Head of caudate nucleus (tissue), 42 donors: ENCODE measurements at regions of chr16 and their contacts with region 1.

Region 1: DNA sequence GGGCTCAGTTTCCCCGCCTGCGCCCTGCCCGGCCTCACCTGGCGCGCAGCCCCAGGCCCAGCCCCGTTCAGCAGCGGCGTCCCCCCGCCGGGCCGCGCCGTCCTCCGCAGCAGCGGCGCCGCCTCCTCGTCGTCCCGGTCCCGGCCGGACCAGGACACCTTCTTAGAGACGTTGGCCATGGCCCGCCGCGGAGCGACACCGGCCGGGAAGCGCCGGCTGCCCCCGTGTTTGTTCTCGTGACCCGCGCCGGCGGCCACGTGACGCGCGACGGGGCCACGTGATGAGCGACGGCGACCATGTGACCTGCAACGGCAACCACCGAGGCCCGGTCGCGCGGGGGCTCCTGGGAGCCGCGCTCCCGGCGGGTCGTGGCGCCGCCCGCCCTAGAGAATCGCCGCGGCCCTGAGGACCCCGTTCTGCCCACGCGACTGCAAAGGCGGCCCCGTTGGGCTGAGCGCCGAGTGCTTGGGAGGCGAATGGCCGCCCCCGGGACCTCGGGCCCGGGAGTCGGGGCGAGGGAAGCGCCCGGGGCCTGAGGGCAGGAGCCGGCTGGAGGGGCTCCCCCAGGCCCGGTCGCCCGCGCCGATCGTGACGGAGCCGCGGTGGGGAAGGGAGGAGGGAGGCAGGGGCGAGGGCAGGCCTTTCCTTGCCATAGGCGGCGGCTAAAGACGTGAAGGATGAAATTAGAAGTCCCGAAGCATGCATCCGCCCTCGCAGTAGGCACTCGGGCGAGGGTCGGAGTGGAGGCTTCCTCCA is at the start of gene CLCN7:
- DNase-seq: peak; percentile 74 to 96 (median 89)

Region 2: DNA sequence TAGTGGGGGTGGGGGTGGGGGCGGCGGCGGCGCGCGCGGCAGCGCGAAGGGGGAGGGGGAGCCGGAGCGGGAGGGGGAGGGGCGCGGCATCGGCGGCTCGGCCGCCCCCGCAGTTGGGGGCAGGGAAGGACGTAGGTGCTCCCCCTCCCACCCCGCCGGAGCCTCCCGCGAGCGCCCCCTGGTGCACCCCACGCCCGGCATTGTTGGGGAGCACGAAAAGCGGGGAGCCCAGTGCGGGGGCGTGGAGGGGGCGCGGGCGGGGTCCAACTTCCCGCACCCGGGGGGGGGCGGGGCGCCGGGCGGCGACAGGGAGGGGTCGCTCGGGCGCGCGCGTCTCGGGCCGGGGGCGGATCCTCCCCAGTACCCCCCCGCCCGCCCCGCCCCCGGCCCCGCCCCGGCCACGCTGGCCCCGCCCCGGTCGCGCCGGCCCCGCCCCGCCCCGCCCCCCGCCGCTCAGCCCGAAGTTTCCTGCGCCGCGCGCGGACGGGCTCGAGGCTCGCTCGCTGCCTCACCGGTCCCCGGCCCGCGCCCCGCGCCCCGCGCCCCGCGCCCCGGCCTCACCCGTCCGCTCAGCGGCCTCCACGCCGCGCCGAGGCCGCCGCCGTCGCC is 322.2 kb before region 1 on chr16 and contains the start of gene CACNA1H:
- intact Hi-C with region 1: no loop called
- DNase-seq: peak in 21 of 42 donors; percentile 23 to 69 (median 46)

Region 3: DNA sequence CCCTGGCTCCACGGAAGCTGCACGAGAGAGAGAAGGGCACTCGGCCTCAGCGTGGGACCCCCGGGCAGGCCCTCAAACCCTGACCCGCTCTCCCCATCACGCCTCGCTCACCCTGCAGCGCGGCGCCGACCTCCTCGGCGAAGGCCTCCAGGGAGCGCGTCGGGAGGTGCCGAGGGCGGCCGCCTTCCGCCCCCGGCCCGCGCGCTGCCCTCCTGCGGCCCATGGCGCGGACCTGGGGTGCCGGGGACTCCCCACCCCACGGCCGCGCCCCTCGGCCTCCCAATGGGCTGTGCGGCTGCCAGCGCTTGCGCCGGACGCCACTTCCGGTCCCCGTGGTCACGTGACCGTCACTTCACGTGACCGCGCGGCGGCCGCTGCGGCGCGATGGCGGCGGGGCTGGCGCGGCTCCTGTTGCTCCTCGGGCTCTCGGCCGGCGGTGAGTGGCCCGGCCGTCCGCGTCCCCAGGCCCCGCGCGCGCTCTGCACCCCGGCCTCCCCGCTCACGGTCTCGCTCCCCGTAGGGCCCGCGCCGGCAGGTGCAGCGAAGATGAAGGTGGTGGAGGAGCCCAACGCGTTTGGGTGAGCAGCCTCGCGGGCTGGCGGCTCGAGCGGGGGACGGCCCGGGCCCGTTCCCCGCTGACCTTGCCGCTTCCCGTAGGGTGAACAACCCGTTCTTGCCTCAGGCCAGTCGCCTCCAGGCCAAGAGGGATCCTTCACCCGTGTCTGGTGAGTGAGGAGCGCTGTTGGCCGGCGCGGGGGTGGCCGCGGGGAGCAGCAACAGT is 123.2 kb before region 1 on chr16 and contains the starts of genes GNPTG and TSR3:
- intact Hi-C with region 1: loop called (anchors 10 kb)
- DNase-seq: peak; percentile 24 to 89 (median 76)

Region 4: DNA sequence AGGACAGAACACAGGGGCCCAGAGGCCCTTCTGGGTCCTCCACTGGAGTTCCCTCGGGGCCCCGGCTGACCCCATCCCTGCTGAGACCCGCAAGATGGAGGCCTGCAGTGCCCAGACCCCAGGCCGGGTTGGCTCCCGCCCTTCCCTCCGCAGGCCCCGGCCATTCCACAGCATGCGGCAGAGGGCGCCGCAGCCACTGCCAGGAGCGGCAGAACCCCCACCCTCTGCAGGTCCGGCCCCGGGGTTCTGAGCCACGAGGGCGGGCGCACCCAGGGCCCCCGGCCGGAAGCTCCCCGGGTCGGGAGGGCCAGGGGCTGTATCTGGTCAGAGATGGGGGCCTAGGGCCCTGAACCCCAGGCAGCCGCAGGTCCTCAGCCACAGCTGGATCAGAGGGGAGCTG is 46.5 kb before region 1 on chr16:
- intact Hi-C with region 1: loop called (anchors 10 kb)
- DNase-seq: peak in 13 of 42 donors; percentile 8 to 43 (median 21)